ENCODE measurements at regions of chr19 and their contacts with region 1.

Region 1: GRCh38 chr19:11924886-11925650 is at the start of gene ZNF700:
- DNase-seq: peak; percentile 86 to 94 (median 90)
- H3K4me3 ChIP-seq: peak within 1 kb of the TSS; percentile 93
- H3K4me3 Mint-ChIP-seq: peak within 1 kb of the TSS; percentile 93 to 99 (median 97)
- H3K27ac ChIP-seq: peak within 1 kb of the TSS; percentile 87
- H3K27ac Mint-ChIP-seq: peak within 1 kb of the TSS; percentile 96 to 99 (median 98)
- H3K4me1 ChIP-seq: peaks cover 17% of the 10 kb centered on the region
- H3K4me1 Mint-ChIP-seq: peaks cover 45 to 55% (median 47%) of the 10 kb centered on the region in 3 donors
- H3K27me3 ChIP-seq: no peaks in the 10 kb centered on the region
- H3K27me3 Mint-ChIP-seq: peaks cover 0 to 2% of the 10 kb centered on the region in 2 donors
- total RNA-seq, gene ZNF700: 10.1 to 10.8 TPM

Region 2: GRCh38 chr19:11324079-11324661 is 600.9 kb before region 1 on chr19:
- CTCF ChIA-PET with region 1: no interaction called
- POLR2A ChIA-PET with region 1: no interaction called
- DNase-seq: peak in 2 of 5 donors; percentile 24 to 31
- H3K4me3 ChIP-seq: no peak overlapping the region
- H3K4me3 Mint-ChIP-seq: peak overlapping the region in 4 of 7 donors; percentile 27 to 80 (median 62)
- H3K27ac ChIP-seq: peak overlapping the region; percentile 12
- H3K27ac Mint-ChIP-seq: peak overlapping the region; percentile 29 to 95 (median 86)
- H3K4me1 ChIP-seq: peaks cover 6% of the 10 kb centered on the region
- H3K4me1 Mint-ChIP-seq: peaks cover 12 to 17% (median 13%) of the 10 kb centered on the region in 3 donors
- H3K27me3 ChIP-seq: no peaks in the 10 kb centered on the region
- H3K27me3 Mint-ChIP-seq: peaks cover 0 to 1% of the 10 kb centered on the region in 2 donors

Region 3: GRCh38 chr19:11798391-11799330 is 126.4 kb before region 1 on chr19 and contains the start of gene ZNF491:
- CTCF ChIA-PET with region 1: interaction called, 16 read pairs
- POLR2A ChIA-PET with region 1: no interaction called
- DNase-seq: peak; percentile 71 to 86 (median 75)
- H3K4me3 ChIP-seq: peak within 1 kb of the TSS; percentile 67
- H3K4me3 Mint-ChIP-seq: peak within 1 kb of the TSS; percentile 87 to 95 (median 91)
- H3K27ac ChIP-seq: no peak within 1 kb of the TSS
- H3K27ac Mint-ChIP-seq: peak within 1 kb of the TSS; percentile 68 to 92 (median 88)
- H3K4me1 ChIP-seq: peaks cover 12% of the 10 kb centered on the region
- H3K4me1 Mint-ChIP-seq: peaks cover 12 to 20% (median 14%) of the 10 kb centered on the region in 3 donors
- H3K27me3 ChIP-seq: no peaks in the 10 kb centered on the region
- H3K27me3 Mint-ChIP-seq: peaks cover 0 to 5% of the 10 kb centered on the region in 2 donors
- total RNA-seq, gene ZNF491: 1.1 to 1.3 TPM

Region 4: GRCh38 chr19:11964858-11965645 is 40.0 kb after region 1 on chr19 and contains the start of gene ZNF763:
- CTCF ChIA-PET with region 1: interaction called, 21 read pairs
- POLR2A ChIA-PET with region 1: interaction called, 10 read pairs
- DNase-seq: peak; percentile 82 to 92 (median 85)
- H3K4me3 ChIP-seq: peak within 1 kb of the TSS; percentile 100
- H3K4me3 Mint-ChIP-seq: peak within 1 kb of the TSS; percentile 90 to 98 (median 97)
- H3K27ac ChIP-seq: peak within 1 kb of the TSS; percentile 91
- H3K27ac Mint-ChIP-seq: peak within 1 kb of the TSS; percentile 89 to 98 (median 95)
- H3K4me1 ChIP-seq: peaks cover 16% of the 10 kb centered on the region
- H3K4me1 Mint-ChIP-seq: peaks cover 26 to 30% (median 29%) of the 10 kb centered on the region in 3 donors
- H3K27me3 ChIP-seq: no peaks in the 10 kb centered on the region
- H3K27me3 Mint-ChIP-seq: no peaks in the 10 kb centered on the region
- total RNA-seq, gene ZNF763: 2.0 to 2.3 TPM

Region 5: DNA sequence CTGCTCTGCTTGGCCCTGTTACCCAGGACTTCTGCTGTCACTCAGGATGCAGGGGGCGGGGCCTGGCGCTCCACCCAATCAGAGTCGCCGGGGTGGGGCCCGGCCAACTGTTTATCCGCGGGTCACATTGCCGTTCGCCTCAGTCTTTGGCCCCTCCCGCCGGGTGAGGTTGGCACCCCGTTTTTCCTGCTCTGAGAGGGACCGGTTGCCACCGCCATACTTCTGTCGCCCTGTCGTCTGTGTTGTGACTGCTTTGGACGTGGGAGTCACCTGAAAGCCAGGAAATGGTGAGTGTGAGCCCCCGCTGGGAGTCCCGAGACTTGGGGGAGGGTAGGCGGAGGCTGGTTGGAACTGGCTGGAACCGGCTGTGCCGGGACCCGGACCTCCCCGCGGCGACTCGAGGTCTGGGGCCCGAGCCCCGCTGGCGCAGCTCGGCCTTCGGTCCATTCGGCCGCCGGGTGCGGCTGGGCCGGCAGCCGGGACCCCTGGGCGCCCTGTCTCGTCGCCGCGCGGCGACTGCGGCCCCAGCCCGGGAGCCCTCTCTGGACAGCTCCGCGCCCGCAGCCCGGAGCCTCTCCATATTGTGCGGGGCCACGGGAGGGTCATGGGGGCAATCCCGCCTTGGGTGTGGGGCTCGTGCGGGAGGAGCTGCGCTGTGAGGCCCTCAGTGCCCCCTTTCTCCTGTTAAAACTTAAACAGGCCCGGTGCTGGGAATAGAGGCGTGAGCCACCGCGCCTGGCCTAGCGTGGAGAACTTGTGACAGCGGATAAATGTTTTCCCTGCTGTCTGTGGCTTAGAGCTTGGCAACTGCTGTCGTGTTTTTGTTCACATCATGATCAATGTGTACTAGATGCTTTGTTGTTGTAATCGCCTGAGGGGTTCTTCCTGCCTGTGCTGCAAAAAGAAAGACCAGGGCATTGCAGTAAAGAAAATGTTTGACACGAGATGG is 139.8 kb after region 1 on chr19 and contains the start of gene ZNF844:
- CTCF ChIA-PET with region 1: interaction called, 14 read pairs
- POLR2A ChIA-PET with region 1: no interaction called
- DNase-seq: peak; percentile 46 to 76 (median 52)
- H3K4me3 ChIP-seq: peak within 1 kb of the TSS; percentile 66
- H3K4me3 Mint-ChIP-seq: peak within 1 kb of the TSS; percentile 80 to 91 (median 85)
- H3K27ac ChIP-seq: peak within 1 kb of the TSS; percentile 51
- H3K27ac Mint-ChIP-seq: peak within 1 kb of the TSS in 6 of 8 donors; percentile 60 to 95 (median 66)
- H3K4me1 ChIP-seq: no peaks in the 10 kb centered on the region
- H3K4me1 Mint-ChIP-seq: peaks cover 5 to 16% (median 14%) of the 10 kb centered on the region in 3 donors
- H3K27me3 ChIP-seq: no peaks in the 10 kb centered on the region
- H3K27me3 Mint-ChIP-seq: no peaks in the 10 kb centered on the region
- total RNA-seq, gene ZNF844: 5.4 to 5.7 TPM

Region 6: DNA sequence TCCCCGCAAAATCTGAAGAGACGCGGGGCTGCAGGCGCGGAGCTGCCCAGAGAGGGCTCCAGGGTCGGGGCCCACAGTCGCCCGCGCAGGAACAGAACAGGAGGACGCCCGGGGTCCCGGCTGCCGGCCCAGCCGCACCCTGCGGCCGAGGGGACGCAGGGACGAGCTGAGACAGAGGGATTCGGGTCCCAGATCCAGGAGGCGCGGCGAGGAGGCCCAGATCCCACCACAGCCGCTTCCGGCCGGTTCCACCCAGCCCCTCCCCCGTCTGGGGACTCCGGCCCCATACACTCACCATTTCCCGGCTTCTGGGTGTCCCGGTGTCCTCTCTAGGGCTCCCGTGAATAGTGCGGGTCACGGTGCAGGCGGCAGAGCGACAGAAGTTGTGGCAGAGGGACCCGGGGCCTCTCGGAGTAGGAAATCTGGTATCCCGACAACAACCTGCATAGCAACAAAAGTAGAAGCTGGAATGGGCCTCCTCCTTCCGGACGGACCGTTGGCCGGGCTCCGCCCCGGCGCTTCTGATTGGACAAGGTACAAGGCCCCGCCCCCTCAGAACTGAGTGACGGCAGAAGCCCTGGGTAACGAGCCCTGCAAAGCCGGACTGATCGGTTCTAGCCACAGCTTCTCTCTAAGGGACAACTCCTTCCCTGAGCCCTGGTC is 214.9 kb after region 1 on chr19 and contains the start of gene ZNF20:
- CTCF ChIA-PET with region 1: interaction called, 40 read pairs
- POLR2A ChIA-PET with region 1: interaction called, 3 read pairs
- DNase-seq: peak; percentile 79 to 91 (median 86)
- H3K4me3 ChIP-seq: peak within 1 kb of the TSS; percentile 67
- H3K4me3 Mint-ChIP-seq: peak within 1 kb of the TSS; percentile 83 to 94 (median 89)
- H3K27ac ChIP-seq: peak within 1 kb of the TSS; percentile 48
- H3K27ac Mint-ChIP-seq: peak within 1 kb of the TSS; percentile 57 to 95 (median 83)
- H3K4me1 ChIP-seq: peaks cover 22% of the 10 kb centered on the region
- H3K4me1 Mint-ChIP-seq: peaks cover 33 to 41% (median 40%) of the 10 kb centered on the region in 3 donors
- H3K27me3 ChIP-seq: no peaks in the 10 kb centered on the region
- H3K27me3 Mint-ChIP-seq: no peaks in the 10 kb centered on the region
- total RNA-seq, gene ZNF20: 2.5 to 3.7 TPM